B cell (primary cell): ENCODE measurements at regions of chr7 and their contacts with region 1.

Region 1: DNA sequence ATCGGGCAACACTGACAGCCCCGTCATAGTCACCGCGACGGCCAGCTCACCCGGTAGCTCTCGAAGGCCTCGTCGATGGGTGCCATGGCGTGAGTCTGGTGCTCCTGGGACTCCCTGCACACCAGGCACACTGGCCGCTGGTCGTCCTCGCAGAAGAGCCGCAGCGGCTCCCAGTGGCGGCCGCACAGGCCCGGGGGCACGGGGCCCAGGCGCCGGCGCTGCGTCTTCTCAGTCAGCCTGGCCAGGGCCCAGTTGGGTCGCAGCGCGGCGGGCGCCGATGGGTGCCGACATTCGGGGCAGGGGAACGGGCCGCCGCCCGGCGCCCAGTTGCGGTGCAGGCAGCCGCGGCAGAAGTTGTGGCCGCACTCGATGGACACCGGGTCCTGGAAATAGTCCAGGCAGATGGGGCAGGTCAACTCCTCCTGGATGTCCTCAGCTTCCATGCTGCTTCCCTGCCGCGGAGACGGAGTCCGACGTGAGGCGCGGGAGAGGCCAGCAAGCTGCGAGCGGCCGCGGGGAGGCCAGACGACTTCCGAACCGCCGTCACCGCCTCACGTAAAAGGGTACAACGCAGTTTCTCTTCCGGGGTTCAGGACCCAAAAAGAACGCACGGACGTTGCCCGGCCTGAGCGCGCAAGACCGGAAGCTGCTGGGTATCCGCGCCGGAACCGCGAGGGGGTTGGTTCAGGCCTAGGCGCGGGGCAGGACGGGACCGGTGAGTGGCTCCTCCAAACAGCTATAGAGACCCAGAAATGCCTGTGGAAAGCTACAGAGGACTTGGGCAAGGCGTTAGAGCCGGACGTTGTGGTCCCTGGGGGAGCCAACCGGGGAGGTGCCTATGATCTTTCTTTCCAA is at the start of gene TRIM4:
- DNase-seq: peak; percentile 92
- ATAC-seq: peak; percentile 97
- H3K4me3 ChIP-seq: peak within 1 kb of the TSS; percentile 65 to 89 (median 78)
- H3K4me3 Mint-ChIP-seq: peak within 1 kb of the TSS; percentile 96
- H3K27ac ChIP-seq: peak within 1 kb of the TSS; percentile 81 to 93
- H3K27ac Mint-ChIP-seq: peak within 1 kb of the TSS; percentile 97
- H3K4me1 ChIP-seq: peaks cover 32 to 35% of the 10 kb centered on the region in 2 donors
- H3K4me1 Mint-ChIP-seq: peaks cover 47% of the 10 kb centered on the region
- H3K27me3 ChIP-seq: no peaks in the 10 kb centered on the region
- H3K27me3 Mint-ChIP-seq: peaks cover 6% of the 10 kb centered on the region
- CTCF ChIP-seq: peak; percentile 21
- total RNA-seq, gene TRIM4: 56.7 and 58.1 TPM in 2 replicates

Region 2: DNA sequence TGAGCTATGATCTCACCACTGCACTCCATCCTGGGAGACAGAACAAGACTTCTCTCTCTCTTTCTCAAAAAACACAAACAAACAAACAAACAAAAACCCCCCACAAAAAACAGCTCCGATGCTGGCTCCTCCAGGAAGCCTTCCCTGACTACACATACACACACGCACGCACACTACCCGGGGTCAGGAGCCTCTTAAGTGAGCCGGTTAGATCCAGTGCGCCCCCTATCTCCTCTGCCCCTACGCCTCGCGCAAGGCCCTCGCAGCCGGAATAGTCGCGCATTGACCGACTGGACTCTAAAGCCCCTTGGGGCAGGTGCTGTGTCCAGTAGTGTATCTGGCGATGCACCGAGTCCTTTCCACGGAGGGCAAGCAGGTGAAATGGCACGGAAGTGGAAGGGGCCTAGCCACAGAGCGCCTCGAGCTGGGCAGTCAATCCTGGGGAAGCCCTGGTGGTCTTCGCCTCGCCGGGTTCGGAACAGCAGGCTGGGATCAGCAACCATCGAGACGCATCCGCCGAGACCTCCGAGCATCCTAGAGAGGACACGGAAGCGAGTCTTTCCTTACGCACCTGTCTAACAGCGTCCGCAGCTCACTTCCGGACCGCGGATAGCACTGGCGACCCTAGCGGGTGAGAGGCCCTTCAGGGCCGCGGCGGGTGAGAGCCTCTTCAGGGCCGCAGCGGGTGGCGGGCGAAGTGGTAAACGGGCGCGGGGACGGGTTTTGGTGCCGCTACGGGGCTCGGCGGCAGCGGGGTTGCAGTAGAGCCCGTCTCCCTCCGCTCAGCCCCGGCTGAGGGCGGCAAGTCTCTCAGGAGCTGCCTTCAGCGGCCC is 302.6 kb before region 1 on chr7 and contains the start of gene ZSCAN25:
- CTCF ChIA-PET with region 1: interaction called, 3 read pairs
- POLR2A ChIA-PET with region 1: no interaction called
- intact Hi-C with region 1: loop called (anchors 2 kb)
- DNase-seq: peak; percentile 91
- ATAC-seq: peak; percentile 95
- H3K4me3 ChIP-seq: peak within 1 kb of the TSS; percentile 86 to 99 (median 95)
- H3K4me3 Mint-ChIP-seq: peak within 1 kb of the TSS; percentile 98
- H3K27ac ChIP-seq: peak within 1 kb of the TSS; percentile 73 to 90
- H3K27ac Mint-ChIP-seq: peak within 1 kb of the TSS; percentile 95
- H3K4me1 ChIP-seq: peaks cover 17 to 18% of the 10 kb centered on the region in 2 donors
- H3K4me1 Mint-ChIP-seq: peaks cover 28% of the 10 kb centered on the region
- H3K27me3 ChIP-seq: no peaks in the 10 kb centered on the region
- H3K27me3 Mint-ChIP-seq: no peaks in the 10 kb centered on the region
- CTCF ChIP-seq: peak; percentile 7
- total RNA-seq, gene ZSCAN25: 37.1 and 39.5 TPM in 2 replicates

Region 3: DNA sequence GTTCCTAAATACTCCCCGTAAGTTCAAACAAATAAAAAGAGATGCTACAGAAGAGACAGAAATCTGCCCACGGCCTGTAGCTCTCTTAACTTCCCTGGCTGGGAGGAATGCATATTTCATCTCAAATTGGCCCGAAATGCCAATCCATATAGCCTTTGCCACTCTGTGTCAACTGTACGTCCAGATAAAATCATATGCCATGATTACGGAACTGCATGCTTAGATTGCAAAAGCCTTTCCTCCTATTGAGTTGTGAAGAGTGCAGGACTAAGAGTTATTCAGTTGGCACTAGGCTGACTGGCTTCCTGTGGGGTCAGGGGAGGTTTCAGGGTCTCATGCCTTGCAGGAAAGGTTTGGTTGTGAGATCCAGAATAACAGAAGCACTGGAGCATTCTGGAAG is 66.3 kb after region 1 on chr7:
- CTCF ChIA-PET with region 1: interaction called, 94 read pairs
- POLR2A ChIA-PET with region 1: no interaction called
- intact Hi-C with region 1: no loop called
- DNase-seq: no peak
- ATAC-seq: no peak
- H3K4me3 ChIP-seq: no peak overlapping the region
- H3K4me3 Mint-ChIP-seq: no peak overlapping the region
- H3K27ac ChIP-seq: no peak overlapping the region
- H3K27ac Mint-ChIP-seq: no peak overlapping the region
- H3K4me1 ChIP-seq: no peaks in the 10 kb centered on the region
- H3K4me1 Mint-ChIP-seq: peaks cover 1% of the 10 kb centered on the region
- H3K27me3 ChIP-seq: peaks cover 0 to 5% (median 0%) of the 10 kb centered on the region in 4 experiments
- H3K27me3 Mint-ChIP-seq: peaks cover 40% of the 10 kb centered on the region
- CTCF ChIP-seq: no peak

Region 4: GRCh38 chr7:100015232-100016209 is 96.3 kb after region 1 on chr7 and contains the start of gene ZKSCAN1:
- CTCF ChIA-PET with region 1: interaction called, 3 read pairs
- POLR2A ChIA-PET with region 1: interaction called, 5 read pairs
- intact Hi-C with region 1: loop called (anchors 1 kb)
- DNase-seq: peak; percentile 91
- ATAC-seq: peak; percentile 95
- H3K4me3 ChIP-seq: peak within 1 kb of the TSS; percentile 75 to 89 (median 85)
- H3K4me3 Mint-ChIP-seq: peak within 1 kb of the TSS; percentile 93
- H3K27ac ChIP-seq: peak within 1 kb of the TSS; percentile 80 to 87
- H3K27ac Mint-ChIP-seq: peak within 1 kb of the TSS; percentile 94
- H3K4me1 ChIP-seq: peaks cover 15 to 19% of the 10 kb centered on the region in 2 donors
- H3K4me1 Mint-ChIP-seq: peaks cover 38% of the 10 kb centered on the region
- H3K27me3 ChIP-seq: no peaks in the 10 kb centered on the region
- H3K27me3 Mint-ChIP-seq: peaks cover 6% of the 10 kb centered on the region
- CTCF ChIP-seq: no peak
- total RNA-seq, gene ZKSCAN1: 89.3 and 97.4 TPM in 2 replicates